AG04450 (cell line): ENCODE measurements at regions of chr11 and their contacts with region 1.

Region 1: GRCh38 chr11:119205574-119206510 is at the start of gene CBL:
- DNase-seq: peak; percentile 64
- H3K4me3 ChIP-seq: peak within 1 kb of the TSS; percentile 93
- H3K27ac ChIP-seq: peak within 1 kb of the TSS; percentile 61
- H3K27me3 ChIP-seq: peaks cover 2% of the 10 kb centered on the region
- CTCF ChIP-seq: peak; percentile 87
- polyA plus RNA-seq, gene CBL: 19.9 and 24.3 TPM in 2 replicates

Region 2: DNA sequence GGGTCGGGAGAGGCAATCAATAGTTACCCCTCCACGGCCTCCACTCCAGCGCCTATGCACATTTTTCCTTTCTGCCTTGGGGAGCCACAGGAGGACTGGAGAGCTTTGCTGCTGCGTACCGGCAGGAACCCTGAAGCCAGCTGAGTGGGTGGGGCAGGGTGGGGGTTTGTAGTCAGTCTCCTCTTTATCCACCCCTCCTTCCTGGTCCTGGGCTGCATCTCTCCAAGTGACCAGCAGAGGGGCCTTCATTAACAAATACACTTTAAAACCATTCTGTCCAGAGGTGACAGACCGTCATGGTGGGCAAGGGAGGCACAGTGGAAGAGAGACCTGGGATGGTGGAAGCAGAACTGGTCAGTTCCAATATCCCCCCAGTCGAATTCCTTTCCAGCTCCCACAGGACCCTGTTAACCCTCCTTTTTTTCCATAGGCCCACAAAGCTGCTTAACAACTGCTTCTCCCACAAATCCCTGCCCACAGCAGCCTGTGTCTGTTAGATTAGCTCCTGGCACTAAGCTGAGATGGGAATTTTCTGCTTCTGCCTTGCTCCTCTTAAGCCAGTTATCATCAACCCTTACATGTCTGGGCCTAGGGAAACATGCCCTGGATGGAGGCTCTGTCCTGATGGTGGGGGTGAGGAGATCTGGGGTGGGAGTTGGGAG is 60.9 kb before region 1 on chr11:
- CTCF ChIA-PET with region 1: interaction called, 18 read pairs
- POLR2A ChIA-PET with region 1: no interaction called
- DNase-seq: peak; percentile 32
- H3K4me3 ChIP-seq: no peak overlapping the region
- H3K27ac ChIP-seq: no peak overlapping the region
- H3K27me3 ChIP-seq: peaks cover 26% of the 10 kb centered on the region
- CTCF ChIP-seq: peak; percentile 72

Region 3: DNA sequence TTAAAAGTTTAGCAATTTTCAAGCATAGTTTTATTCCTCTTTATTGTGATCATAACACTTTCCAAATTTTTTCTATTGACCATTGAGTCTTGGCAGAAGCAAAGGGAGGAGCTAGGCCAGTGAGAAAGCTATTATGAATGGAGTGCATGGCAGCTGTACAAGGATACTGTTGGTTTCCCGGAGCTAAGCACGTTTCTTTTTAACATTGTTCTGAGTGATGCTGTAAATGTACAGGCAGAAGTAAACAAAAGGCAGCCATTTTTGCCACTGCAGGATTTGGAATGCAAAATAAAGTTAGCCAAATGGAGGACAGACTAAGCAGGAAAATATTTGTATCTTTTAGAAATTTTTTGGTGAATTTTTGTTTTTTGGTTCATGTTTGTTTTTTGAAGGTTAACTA is 16.5 kb after region 1 on chr11:
- CTCF ChIA-PET with region 1: interaction called, 23 read pairs
- POLR2A ChIA-PET with region 1: interaction called, 3 read pairs
- DNase-seq: peak; percentile 51
- H3K4me3 ChIP-seq: no peak overlapping the region
- H3K27ac ChIP-seq: no peak overlapping the region
- H3K27me3 ChIP-seq: no peaks in the 10 kb centered on the region
- CTCF ChIP-seq: no peak

Region 4: DNA sequence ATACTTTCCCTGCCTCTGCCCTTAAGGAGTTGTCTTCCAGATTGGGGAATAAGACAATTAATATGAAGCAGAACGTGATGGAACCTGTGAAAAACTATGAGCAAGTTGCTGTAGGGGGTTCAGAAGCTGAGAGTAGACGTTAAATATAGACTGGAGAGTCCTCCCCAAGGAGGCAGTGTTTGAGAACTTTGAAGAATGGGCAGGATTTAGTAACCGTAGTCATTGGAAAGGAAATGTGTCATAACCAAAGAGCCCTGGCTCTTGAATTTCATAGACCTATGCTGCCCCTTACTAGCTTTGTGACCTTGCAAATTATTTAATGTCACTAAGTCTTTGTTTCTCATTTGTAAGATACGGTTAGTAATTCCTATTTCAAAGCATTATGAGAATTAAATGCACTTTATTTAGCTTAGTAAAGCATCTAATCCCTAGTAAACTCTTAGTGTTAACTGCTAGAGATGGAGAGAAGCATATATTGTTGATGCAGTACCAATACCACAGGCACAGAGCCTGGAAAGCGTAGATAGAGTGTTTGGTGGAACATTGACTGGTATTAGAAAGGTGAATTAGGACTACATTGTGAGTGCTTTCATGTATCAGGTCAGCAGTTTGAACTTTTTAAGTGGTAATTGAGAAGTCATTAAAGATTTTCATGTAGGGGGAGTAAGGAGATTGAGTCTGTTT is 57.0 kb after region 1 on chr11:
- CTCF ChIA-PET with region 1: interaction called, 30 read pairs
- POLR2A ChIA-PET with region 1: no interaction called
- DNase-seq: no peak
- H3K4me3 ChIP-seq: no peak overlapping the region
- H3K27ac ChIP-seq: peak overlapping the region; percentile 13
- H3K27me3 ChIP-seq: no peaks in the 10 kb centered on the region
- CTCF ChIP-seq: no peak

Region 5: DNA sequence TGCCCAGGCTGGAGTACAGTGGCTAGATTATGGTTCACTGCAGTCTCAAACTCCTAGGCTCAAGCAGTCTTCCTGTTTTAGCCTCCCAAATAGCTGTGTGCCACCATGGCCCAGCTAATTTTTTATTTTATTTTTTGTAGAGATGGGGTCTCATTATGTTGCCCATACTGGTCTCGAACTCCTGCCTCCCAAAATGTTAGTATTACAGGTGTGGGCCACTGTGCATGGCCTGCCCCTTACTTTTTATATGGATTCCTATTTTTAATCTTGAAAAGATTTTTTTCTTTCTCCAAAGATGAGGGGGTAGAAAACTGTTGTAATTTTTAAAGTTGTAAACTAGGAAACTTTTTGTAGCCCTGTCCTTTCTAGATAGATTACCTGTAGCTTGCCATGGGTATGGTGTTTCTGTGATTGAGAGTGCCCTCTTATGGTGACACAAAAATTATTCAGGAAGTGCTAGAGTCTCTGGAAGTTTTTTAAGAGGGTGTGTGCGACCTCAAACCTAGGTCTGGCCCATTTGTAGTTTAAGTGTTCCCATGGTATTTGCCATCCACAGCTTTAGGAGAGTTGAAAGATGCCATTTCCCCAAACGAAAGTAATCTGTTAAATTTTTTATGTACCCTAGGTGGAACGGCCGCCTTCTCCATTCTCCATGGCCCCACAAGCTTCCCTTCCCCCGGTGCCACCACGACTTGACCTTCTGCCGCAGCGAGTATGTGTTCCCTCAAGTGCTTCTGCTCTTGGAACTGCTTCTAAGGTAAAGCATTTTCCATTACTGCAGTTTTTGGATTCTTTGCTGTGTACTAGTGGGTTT is 78.7 kb after region 1 on chr11:
- CTCF ChIA-PET with region 1: interaction called, 22 read pairs
- POLR2A ChIA-PET with region 1: no interaction called
- DNase-seq: no peak
- H3K4me3 ChIP-seq: no peak overlapping the region
- H3K27ac ChIP-seq: no peak overlapping the region
- H3K27me3 ChIP-seq: no peaks in the 10 kb centered on the region
- CTCF ChIP-seq: peak; percentile 47

Region 6: DNA sequence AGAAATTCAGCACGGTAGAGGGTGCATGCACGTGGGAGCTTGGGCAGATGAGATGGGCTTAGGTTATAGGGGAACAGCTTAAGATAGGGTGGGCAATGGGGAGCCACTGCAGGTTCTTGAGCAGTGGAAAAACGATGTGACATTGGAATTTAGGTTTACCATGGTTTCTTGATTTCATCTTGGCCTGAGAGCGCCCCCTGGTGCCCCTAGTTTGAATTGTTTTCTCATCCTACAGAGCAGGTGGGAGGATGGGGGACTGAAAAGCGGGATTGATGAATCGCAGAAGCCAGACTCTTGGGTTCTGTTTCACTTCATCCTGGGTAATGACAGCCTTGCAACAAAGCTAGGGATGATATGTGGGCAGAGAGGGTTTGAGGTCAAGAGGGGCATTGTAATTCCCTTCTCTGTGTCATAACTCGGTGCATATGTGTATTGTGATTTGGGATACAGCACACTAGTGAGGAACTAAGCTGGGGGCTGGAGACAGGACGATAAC is 117.7 kb after region 1 on chr11:
- CTCF ChIA-PET with region 1: interaction called, 55 read pairs
- POLR2A ChIA-PET with region 1: interaction called, 5 read pairs
- DNase-seq: no peak
- H3K4me3 ChIP-seq: no peak overlapping the region
- H3K27ac ChIP-seq: no peak overlapping the region
- H3K27me3 ChIP-seq: no peaks in the 10 kb centered on the region
- CTCF ChIP-seq: peak; percentile 81